ENCODE measurements at regions of chr12 and their contacts with region 1.

Region 1: GRCh38 chr12:68807576-68808387 is at the start of gene MDM2:
- DNase-seq: peak; percentile 81
- ATAC-seq: peak; percentile 86
- H3K4me3 ChIP-seq: peak within 1 kb of the TSS; percentile 96
- H3K27ac ChIP-seq: peak within 1 kb of the TSS; percentile 100
- H3K4me1 ChIP-seq: peaks cover 2% of the 10 kb centered on the region; the same call in 1 of the 2 replicates
- H3K27me3 ChIP-seq: no peaks in the 10 kb centered on the region
- CTCF ChIP-seq: peak; percentile 77
- POLR2A ChIP-seq: peak; percentile 82
- RAD21 ChIP-seq: 0 out of 2 replicates have a peak, but pooled peaks have one; percentile 32
- total RNA-seq, gene MDM2: 196 and 235 TPM in 2 replicates

Region 2: DNA sequence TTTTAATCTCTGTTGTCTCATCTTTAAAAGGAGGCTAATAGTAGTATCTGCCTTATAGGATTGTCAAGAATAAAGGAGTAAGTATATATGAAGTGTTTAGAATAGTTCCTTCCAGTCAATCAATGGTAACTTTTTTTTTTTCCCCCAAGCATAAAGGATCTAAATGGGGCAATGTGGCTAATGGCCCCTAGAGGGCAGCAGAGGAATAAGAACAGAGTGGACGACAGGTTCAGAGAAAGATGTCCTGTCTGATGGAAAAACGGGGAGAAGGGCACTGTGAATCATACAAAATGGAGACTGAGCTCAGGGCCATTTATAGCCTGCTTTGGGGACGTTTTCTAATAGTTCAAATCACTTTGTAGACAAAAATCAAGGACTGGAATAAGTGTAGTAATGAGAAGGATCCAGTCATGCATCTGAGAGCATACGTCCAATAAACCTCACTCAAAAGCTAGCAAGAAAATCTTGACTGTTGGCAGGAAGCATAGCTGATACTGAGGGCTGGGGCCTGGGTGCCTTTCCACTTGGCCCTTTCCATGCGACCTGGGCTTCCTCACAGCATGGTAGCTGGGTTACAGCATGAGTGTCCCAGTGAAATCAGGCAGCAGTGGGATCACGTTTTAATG is 767.2 kb before region 1 on chr12:
- CTCF ChIA-PET with region 1: no interaction called
- POLR2A ChIA-PET with region 1: no interaction called
- dilution Hi-C with region 1: no loop called
- in situ Hi-C with region 1: no loop called
- intact Hi-C with region 1: loop called (anchors 5 kb)
- DNase-seq: peak; percentile 73
- ATAC-seq: peak; percentile 95
- H3K4me3 ChIP-seq: no peak overlapping the region
- H3K27ac ChIP-seq: no peak overlapping the region
- H3K4me1 ChIP-seq: no peaks in the 10 kb centered on the region
- H3K27me3 ChIP-seq: no peaks in the 10 kb centered on the region; the same call in 1 of the 2 replicates
- CTCF ChIP-seq: peak; percentile 83
- POLR2A ChIP-seq: no peak
- RAD21 ChIP-seq: peak; percentile 79

Region 3: GRCh38 chr12:68331869-68332727 is 475.7 kb before region 1 on chr12 and contains the start of gene MDM1:
- CTCF ChIA-PET with region 1: no interaction called
- POLR2A ChIA-PET with region 1: no interaction called
- dilution Hi-C with region 1: no loop called
- in situ Hi-C with region 1: no loop called
- intact Hi-C with region 1: loop called (anchors 1 kb)
- DNase-seq: peak; percentile 98
- ATAC-seq: peak; percentile 100
- H3K4me3 ChIP-seq: peak within 1 kb of the TSS; percentile 81
- H3K27ac ChIP-seq: peak within 1 kb of the TSS; percentile 62
- H3K4me1 ChIP-seq: peaks cover 2% of the 10 kb centered on the region; the same call in 1 of the 2 replicates
- H3K27me3 ChIP-seq: no peaks in the 10 kb centered on the region; the same call in 1 of the 2 replicates
- CTCF ChIP-seq: no peak
- POLR2A ChIP-seq: no peak
- RAD21 ChIP-seq: no peak
- total RNA-seq, gene MDM1: 5.6 and 7.8 TPM in 2 replicates

Region 4: GRCh38 chr12:68446893-68447796 is 360.6 kb before region 1 on chr12:
- CTCF ChIA-PET with region 1: no interaction called
- POLR2A ChIA-PET with region 1: interaction called, 10 read pairs
- dilution Hi-C with region 1: no loop called
- in situ Hi-C with region 1: no loop called
- intact Hi-C with region 1: no loop called
- DNase-seq: no peak
- ATAC-seq: no peak
- H3K4me3 ChIP-seq: no peak overlapping the region
- H3K27ac ChIP-seq: no peak overlapping the region
- H3K4me1 ChIP-seq: peaks cover 6% of the 10 kb centered on the region
- H3K27me3 ChIP-seq: no peaks in the 10 kb centered on the region
- CTCF ChIP-seq: no peak
- POLR2A ChIP-seq: no peak
- RAD21 ChIP-seq: no peak

Region 5: DNA sequence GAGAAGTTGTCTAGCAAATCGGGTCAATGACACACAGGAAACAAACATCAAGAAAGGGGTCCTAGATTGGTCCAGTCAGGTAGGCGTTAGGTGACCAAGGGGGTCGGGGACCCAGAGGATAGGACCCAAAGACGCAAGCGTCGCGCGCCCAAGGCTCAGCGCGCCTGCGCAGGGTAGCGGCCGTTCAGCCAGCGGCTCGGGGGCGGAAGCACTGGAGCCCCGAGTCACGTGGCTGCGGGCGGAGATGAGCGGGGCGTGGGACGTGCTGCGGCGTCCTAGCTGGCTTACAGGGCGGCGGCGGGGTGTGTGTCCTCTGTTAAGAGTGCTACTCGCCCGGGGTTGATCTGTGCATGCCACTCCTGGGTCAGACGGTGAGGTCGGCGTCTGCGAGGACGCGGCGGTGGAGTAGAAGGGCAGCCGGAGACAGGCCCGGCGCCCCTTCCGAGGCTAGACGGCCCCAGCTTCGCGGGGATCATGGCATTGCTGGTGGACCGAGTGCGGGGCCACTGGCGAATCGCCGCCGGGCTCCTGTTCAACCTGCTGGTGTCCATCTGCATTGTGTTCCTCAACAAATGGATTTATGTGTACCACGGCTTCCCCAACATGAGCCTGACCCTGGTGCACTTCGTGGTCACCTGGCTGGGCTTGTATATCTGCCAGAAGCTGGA is 61.7 kb before region 1 on chr12 and contains the start of gene SLC35E3:
- CTCF ChIA-PET with region 1: no interaction called
- POLR2A ChIA-PET with region 1: interaction called, 9 read pairs
- dilution Hi-C with region 1: no loop called
- in situ Hi-C with region 1: no loop called
- intact Hi-C with region 1: loop called (anchors 1 kb)
- DNase-seq: peak; percentile 75
- ATAC-seq: peak; percentile 97
- H3K4me3 ChIP-seq: peak within 1 kb of the TSS; percentile 77
- H3K27ac ChIP-seq: peak within 1 kb of the TSS; percentile 67
- H3K4me1 ChIP-seq: no peaks in the 10 kb centered on the region
- H3K27me3 ChIP-seq: no peaks in the 10 kb centered on the region
- CTCF ChIP-seq: no peak
- POLR2A ChIP-seq: 0 out of 2 replicates have a peak, but pooled peaks have one; percentile 42
- RAD21 ChIP-seq: 0 out of 2 replicates have a peak, but pooled peaks have one; percentile 3
- total RNA-seq, gene SLC35E3: 3.6 TPM in 2 replicates